ENCODE measurements at regions of chr16 and their contacts with region 1.

Region 1: DNA sequence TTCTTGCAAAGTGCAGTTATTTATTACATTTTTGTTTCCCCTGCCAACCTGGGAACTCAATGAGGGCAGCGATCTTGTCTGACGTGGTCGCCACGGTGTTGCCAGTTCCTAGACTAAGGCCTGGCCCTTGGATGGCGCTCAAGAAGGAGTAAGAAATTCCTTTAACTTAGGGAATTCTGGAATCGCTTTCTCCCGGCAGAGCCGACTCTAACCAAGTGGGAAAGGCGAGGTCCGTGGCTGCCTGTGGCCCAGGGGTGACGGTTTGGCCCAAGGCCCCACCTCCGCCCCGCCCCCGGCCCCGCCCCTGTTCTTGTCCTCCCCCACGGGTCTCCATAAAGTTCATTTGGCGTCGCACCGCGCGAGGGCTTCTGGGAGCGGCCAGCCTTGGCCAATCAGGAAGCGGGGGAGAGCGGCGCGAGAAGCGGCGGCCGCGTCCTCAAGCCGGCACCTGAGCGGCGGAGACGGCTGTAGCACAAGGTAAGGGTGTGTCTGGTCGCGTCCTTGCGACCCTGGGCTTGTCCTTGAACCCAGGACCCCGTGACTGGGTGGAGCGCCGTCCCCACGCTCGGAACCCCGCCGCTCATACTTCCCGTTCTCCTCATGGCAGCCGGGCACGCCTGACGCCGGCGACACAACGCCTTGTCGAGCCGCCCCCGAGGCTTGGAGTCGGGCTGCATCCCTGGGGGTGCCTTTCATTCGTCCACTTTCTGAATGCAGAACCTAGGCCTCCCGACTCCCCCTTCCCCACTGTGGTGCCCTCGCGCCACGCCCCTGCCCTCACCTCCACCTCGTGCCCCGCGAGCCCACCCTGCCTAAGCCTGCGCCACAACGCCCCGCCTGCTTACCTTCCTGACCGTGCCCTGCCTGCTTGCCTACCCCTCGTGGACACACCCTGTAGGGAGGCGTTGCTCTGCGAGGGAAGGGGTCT is at the start of gene NUP93:
- DNase-seq: peak; percentile 96 to 97
- ATAC-seq: peak; percentile 97
- H3K4me3 ChIP-seq: peak within 1 kb of the TSS; percentile 57 to 59
- H3K27ac ChIP-seq: peak within 1 kb of the TSS; percentile 59 to 81
- H3K4me1 ChIP-seq: no peaks in the 10 kb centered on the region
- H3K27me3 ChIP-seq: no peaks in the 10 kb centered on the region
- total RNA-seq, gene NUP93: 53.7 to 57.5 TPM

Region 2: DNA sequence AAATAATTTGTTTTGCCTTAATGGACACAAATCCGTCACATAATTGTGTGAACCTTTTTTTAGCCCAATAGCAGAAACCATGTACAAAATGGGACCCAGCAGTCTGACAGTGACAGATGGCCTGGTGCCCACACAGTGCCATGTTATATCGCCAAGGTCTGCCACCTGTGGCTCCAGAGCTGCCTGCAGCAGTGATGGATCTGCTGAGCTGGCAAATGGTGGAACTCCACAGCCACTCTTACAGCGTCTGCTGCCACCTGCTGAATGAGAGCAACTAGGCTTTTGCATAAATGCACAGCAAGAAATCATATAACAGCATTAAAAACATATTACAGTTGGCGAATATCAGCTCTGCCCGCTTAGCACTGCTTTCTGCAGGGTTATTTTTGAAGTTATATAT is 59.4 kb after region 1 on chr16:
- intact Hi-C with region 1: loop called in 1 of 2 experiments (anchors 5 kb)
- DNase-seq: no peak
- ATAC-seq: peak; percentile 63
- H3K4me3 ChIP-seq: no peak overlapping the region
- H3K27ac ChIP-seq: no peak overlapping the region
- H3K4me1 ChIP-seq: no peaks in the 10 kb centered on the region
- H3K27me3 ChIP-seq: no peaks in the 10 kb centered on the region

Region 3: GRCh38 chr16:56824331-56824730 is 94.3 kb after region 1 on chr16:
- intact Hi-C with region 1: no loop called
- DNase-seq: no peak
- ATAC-seq: no peak
- H3K4me3 ChIP-seq: no peak overlapping the region
- H3K27ac ChIP-seq: no peak overlapping the region
- H3K4me1 ChIP-seq: no peaks in the 10 kb centered on the region
- H3K27me3 ChIP-seq: no peaks in the 10 kb centered on the region